Activated CD8-positive, alpha-beta T cell treated with anti-CD3 and anti-CD28 coated beads for 36 hours (primary cell): ENCODE measurements at regions of chr7 and their contacts with region 1.

Region 1: DNA sequence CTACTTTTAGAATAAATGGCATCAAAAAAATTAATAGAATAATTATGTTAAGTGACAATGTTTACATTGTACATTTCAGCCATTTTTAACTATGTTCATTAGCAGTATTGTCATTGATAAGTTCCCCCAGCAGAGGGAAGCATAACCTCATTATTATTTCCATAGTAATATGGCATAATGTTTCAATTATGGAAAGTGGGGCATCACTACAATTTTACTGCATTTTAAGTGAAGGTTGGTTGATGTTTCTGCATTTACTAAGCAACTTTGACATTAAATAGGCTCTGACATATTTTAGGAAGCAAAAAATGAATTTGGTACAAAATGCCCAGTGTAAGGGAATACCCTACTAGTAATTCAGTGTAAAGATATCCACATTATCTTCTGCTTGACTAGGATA is 218.3 kb downstream of the SEMA3A start:
- DNase-seq: no peak
- ATAC-seq: peak; percentile 64
- H3K4me3 Mint-ChIP-seq: no peak overlapping the region
- H3K27ac Mint-ChIP-seq: no peak overlapping the region
- H3K4me1 Mint-ChIP-seq: no peaks in the 10 kb centered on the region
- H3K27me3 Mint-ChIP-seq: no peaks in the 10 kb centered on the region
- CTCF ChIP-seq: peak; percentile 66

Region 2: GRCh38 chr7:85023045-85023712 is 1046.9 kb after region 1 on chr7:
- CTCF ChIA-PET with region 1: interaction called, 3 read pairs
- POLR2A ChIA-PET with region 1: no interaction called
- intact Hi-C with region 1: loop called (anchors 5 kb)
- DNase-seq: peak; percentile 21
- ATAC-seq: no peak
- H3K4me3 Mint-ChIP-seq: no peak overlapping the region
- H3K27ac Mint-ChIP-seq: no peak overlapping the region
- H3K4me1 Mint-ChIP-seq: no peaks in the 10 kb centered on the region
- H3K27me3 Mint-ChIP-seq: peaks cover 3% of the 10 kb centered on the region
- CTCF ChIP-seq: peak; percentile 53